ENCODE measurements at regions of chr20 and their contacts with region 1.

Region 1: DNA sequence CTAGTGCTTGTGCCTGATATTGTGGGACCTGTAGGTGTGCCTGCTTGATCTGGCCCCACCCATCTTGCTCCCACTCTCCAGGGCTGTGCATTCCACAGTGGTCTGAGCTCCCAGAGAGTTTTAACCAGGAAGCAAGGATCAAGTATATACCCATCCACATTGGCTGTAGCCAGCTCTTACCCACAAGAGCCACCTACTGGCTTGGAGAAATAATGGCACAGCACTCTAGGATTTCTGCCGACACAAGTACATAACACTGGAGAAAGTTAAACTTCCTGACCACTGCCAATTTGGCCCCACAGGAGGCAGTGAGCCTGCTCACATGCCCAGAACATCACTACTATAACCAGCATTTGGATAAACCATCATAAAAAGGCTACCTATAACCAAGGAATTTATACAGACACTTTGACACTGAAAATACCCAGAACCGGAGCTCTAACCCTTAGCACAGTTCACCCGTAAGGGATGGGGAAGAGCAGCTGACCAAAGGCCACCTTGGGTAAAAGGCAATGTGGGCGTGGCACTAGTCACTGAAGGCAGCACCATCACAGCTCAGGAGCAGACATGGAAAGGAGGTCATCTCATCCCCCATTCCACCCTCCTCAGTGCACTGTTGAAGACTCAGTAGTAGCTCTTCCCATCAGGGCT is 440.4 kb downstream of the BTBD3 start:
- DNase-seq: no peak
- H3K4me3 ChIP-seq: no peak overlapping the region
- H3K27ac ChIP-seq: no peak overlapping the region
- H3K4me1 ChIP-seq: no peaks in the 10 kb centered on the region
- H3K27me3 ChIP-seq: no peaks in the 10 kb centered on the region
- CTCF ChIP-seq: peak; percentile 10 to 75 (median 69)
- EP300 ChIP-seq: no peak
- POLR2A ChIP-seq: no peak
- RAD21 ChIP-seq: peak; percentile 71 to 86

Region 2: GRCh38 chr20:12311094-12311865 is 46.9 kb before region 1 on chr20:
- CTCF ChIA-PET with region 1: interaction called, 10 read pairs
- POLR2A ChIA-PET with region 1: no interaction called
- DNase-seq: no peak
- H3K4me3 ChIP-seq: no peak overlapping the region
- H3K27ac ChIP-seq: no peak overlapping the region
- H3K4me1 ChIP-seq: no peaks in the 10 kb centered on the region
- H3K27me3 ChIP-seq: peaks cover 0 to 1% (median 0%) of the 10 kb centered on the region in 4 experiments; a peak in 1 of 7 replicates
- CTCF ChIP-seq: no peak
- EP300 ChIP-seq: no peak
- POLR2A ChIP-seq: no peak
- RAD21 ChIP-seq: no peak

Region 3: GRCh38 chr20:12331236-12331635 is 26.9 kb before region 1 on chr20:
- CTCF ChIA-PET with region 1: interaction called, 12 read pairs
- POLR2A ChIA-PET with region 1: no interaction called
- DNase-seq: no peak
- H3K4me3 ChIP-seq: no peak overlapping the region
- H3K27ac ChIP-seq: no peak overlapping the region
- H3K4me1 ChIP-seq: no peaks in the 10 kb centered on the region
- H3K27me3 ChIP-seq: no peaks in the 10 kb centered on the region
- CTCF ChIP-seq: no peak
- EP300 ChIP-seq: no peak
- POLR2A ChIP-seq: no peak
- RAD21 ChIP-seq: no peak

Region 4: GRCh38 chr20:12371990-12372389 is 13.9 kb after region 1 on chr20:
- CTCF ChIA-PET with region 1: interaction called, 10 read pairs
- POLR2A ChIA-PET with region 1: no interaction called
- DNase-seq: no peak
- H3K4me3 ChIP-seq: no peak overlapping the region
- H3K27ac ChIP-seq: no peak overlapping the region
- H3K4me1 ChIP-seq: no peaks in the 10 kb centered on the region
- H3K27me3 ChIP-seq: no peaks in the 10 kb centered on the region
- CTCF ChIP-seq: no peak
- EP300 ChIP-seq: no peak
- POLR2A ChIP-seq: no peak
- RAD21 ChIP-seq: no peak

Region 5: DNA sequence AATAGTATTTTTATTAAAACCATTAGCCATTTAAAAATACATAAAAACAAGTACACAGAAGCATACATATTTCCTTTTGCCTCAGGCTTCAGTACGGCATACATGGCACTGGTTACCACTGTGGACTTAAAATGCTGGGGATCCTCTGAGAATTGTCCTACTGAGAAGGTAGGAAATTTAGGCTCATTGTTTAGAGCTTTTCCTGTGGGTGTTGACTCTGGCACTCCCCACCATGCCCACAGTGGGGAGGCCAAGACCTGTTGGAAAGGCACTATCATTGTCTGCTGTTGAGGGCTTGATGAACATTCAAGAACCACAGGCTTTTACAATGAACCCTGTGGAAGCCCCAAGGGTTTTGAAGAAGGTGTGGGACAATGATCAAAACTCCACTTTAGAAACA is 33.0 kb after region 1 on chr20:
- CTCF ChIA-PET with region 1: interaction called, 11 read pairs
- POLR2A ChIA-PET with region 1: no interaction called
- DNase-seq: no peak
- H3K4me3 ChIP-seq: no peak overlapping the region
- H3K27ac ChIP-seq: no peak overlapping the region
- H3K4me1 ChIP-seq: no peaks in the 10 kb centered on the region
- H3K27me3 ChIP-seq: no peaks in the 10 kb centered on the region
- CTCF ChIP-seq: no peak
- EP300 ChIP-seq: no peak
- POLR2A ChIP-seq: no peak
- RAD21 ChIP-seq: peak in 1 of 2 experiments; percentile 18; a peak in 1 of 4 replicates

Region 6: DNA sequence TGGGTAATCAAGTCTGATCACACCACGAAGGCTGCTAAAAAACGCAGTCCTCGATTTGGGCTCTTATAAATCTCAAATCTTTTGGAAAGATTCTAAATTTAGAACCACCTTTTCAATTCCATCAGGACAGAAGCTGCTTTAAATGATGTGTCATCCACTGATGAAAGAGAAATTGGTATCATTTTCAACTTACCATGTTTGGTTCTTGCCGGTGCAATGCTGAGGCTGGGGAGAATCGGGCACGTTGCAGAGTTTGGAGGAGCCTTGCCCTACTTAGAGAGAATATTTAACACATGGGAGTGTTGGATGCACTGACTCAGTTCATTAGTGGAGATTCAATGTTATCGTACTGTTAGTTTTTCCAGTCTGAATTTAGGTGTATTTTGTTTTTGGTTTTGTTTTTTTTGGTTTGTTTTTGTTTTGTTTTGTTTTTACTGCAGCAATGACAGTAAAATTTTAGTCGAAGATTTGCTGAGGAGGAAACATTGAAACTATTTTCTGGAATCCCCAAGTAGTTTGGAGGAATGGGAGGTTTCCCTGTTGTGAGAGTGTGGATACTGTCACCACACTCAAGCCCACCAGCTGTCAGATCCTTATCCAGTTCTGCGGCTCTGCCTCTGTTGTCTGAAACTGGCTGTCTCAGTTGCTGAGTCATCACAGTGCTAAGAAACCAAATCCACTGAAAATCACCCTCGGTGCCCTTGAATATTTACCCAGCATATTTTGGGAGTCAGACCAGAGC is 56.5 kb after region 1 on chr20:
- CTCF ChIA-PET with region 1: no interaction called
- POLR2A ChIA-PET with region 1: no interaction called
- DNase-seq: no peak
- H3K4me3 ChIP-seq: no peak overlapping the region
- H3K27ac ChIP-seq: no peak overlapping the region
- H3K4me1 ChIP-seq: no peaks in the 10 kb centered on the region
- H3K27me3 ChIP-seq: no peaks in the 10 kb centered on the region
- CTCF ChIP-seq: no peak
- EP300 ChIP-seq: no peak
- POLR2A ChIP-seq: no peak
- RAD21 ChIP-seq: no peak

Region 7: DNA sequence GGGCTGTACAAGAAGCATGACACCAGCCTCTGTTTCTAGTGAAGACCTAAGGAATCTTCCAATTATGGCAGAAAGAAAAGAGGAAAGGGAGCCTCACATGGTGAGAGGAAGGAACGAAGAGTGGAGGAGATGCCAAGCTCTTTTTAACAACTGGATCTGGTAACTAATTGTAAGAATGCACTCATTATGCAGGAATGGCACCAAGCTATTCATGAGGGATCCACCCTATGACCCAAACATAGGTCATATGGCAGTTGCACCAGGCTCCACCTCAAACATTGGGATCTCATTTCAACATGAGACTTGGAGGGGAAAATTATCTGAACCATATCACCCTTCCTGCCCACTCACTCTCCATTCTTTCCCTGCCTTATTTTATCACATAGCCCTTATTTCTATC is 154.6 kb after region 1 on chr20:
- CTCF ChIA-PET with region 1: no interaction called
- POLR2A ChIA-PET with region 1: no interaction called
- DNase-seq: peak in 1 of 2 experiments; percentile 1
- H3K4me3 ChIP-seq: no peak overlapping the region
- H3K27ac ChIP-seq: no peak overlapping the region
- H3K4me1 ChIP-seq: peaks cover 0 to 2% (median 1%) of the 10 kb centered on the region in 4 experiments; a peak in 3 of 7 replicates
- H3K27me3 ChIP-seq: no peaks in the 10 kb centered on the region; a peak in 1 of 7 replicates
- CTCF ChIP-seq: no peak
- EP300 ChIP-seq: no peak
- POLR2A ChIP-seq: no peak
- RAD21 ChIP-seq: no peak